Stomach (tissue), 19 donors: ENCODE measurements at regions of chr11 and their contacts with region 1.

Region 1: DNA sequence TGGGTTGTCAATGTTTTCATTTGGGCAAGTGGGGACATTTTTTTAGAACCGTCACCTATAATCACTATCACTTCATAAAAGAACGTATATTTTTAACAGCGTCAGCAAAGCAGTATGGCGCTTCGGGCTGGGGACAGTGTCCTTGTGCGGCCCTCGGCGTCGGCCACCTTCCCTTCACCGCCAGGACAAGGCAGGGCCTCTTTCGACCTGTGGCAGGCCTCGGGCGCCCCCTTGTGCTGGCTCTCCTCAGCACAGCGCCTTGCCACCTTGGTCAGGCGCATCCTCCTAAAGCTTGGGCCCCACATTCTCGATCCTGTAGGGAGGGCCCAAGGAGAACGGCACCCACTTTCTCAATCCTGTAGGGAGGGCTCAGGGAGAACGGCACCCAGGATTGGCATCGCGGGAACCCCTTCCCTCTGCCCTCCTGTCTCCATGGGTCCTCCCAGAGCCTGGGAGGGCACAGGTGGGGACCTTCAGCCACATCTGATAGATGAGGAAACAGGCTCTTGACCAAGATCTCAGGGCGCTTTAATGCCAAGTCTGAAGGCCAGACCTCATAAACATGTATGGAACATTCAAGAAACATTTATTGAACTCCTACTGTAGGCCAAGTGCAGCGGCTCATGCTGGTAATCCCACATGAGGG is 11.5 kb upstream of the FADD start:
- DNase-seq: peak; percentile 87 to 91
- H3K4me3 ChIP-seq: no peak overlapping the region
- H3K27ac ChIP-seq: no peak overlapping the region
- H3K4me1 ChIP-seq: peaks cover 0 to 6% (median 3%) of the 10 kb centered on the region in 4 donors
- H3K27me3 ChIP-seq: peaks cover 0 to 29% (median 0%) of the 10 kb centered on the region in 3 donors
- CTCF ChIP-seq: peak in 5 of 7 experiments; percentile 72 to 92 (median 83)
- EP300 ChIP-seq: no peak
- POLR2A ChIP-seq: no peak

Region 2: DNA sequence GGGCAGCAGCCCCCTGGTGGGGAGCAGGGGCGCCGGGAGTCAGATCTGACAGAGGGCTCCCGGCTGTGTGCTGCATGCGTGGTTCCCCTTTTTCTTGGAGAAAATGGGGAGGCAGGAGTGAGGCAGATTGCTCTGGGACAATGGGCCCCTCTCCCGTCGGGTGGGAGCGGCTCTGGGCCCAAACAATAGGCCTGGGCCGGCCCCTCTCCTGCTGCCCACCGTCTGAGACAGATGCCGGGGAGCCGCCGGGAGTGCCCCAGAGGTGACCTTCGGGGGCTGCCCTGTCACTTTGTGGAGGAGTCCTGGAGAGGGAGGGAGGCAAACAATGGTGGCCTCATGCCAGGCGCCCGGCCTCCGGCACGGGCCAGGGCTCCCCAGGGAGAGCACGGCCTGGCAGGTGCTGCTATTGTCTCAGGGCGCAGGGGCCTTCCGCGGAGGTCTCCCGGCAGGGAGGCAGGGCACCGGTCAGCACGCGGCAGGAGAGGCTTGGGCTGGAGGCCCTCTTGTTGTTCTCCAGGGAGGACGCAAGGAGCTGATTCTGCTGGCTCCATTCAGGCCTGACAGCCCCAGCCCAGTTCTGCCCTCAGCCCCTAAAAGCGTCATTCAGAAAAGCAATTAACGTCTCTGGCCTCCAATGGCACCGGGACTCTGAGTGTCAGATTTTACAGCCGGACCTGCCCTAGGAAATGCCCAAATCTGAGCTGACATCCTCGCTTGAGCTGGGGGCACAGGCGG is 991.1 kb before region 1 on chr11:
- intact Hi-C with region 1: no loop called
- DNase-seq: peak in 1 of 2 donors; percentile 38
- H3K4me3 ChIP-seq: no peak overlapping the region
- H3K27ac ChIP-seq: no peak overlapping the region
- H3K4me1 ChIP-seq: no peaks in the 10 kb centered on the region
- H3K27me3 ChIP-seq: peaks cover 0 to 32% (median 0%) of the 10 kb centered on the region in 3 donors
- CTCF ChIP-seq: no peak
- EP300 ChIP-seq: no peak
- POLR2A ChIP-seq: no peak

Region 3: DNA sequence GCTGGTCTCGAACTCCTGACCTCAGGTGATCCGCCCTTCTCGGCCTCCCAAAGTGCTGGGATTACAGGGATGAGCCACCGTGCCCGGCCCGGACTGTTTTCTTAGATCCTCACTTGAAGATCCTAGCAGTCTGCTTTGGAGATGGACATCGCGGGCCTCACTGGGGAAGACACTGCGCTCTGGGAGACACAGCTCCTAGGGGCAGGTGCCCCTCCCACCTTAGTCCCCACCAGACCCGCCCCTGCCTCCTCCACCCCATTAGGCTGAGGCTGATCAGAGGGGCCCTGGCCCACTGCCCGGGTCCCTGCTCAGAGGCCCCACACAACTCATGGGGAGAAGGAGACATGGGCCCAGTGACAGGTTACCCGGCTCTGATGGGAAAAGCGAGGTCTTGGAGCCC is 505.2 kb before region 1 on chr11:
- intact Hi-C with region 1: loop called (anchors 5 kb)
- DNase-seq: no peak
- H3K4me3 ChIP-seq: no peak overlapping the region
- H3K27ac ChIP-seq: no peak overlapping the region
- H3K4me1 ChIP-seq: peaks cover 5 to 7% (median 6%) of the 10 kb centered on the region in 4 donors
- H3K27me3 ChIP-seq: peaks cover 0 to 28% (median 4%) of the 10 kb centered on the region in 3 donors
- CTCF ChIP-seq: no peak
- EP300 ChIP-seq: no peak
- POLR2A ChIP-seq: no peak

Region 4: DNA sequence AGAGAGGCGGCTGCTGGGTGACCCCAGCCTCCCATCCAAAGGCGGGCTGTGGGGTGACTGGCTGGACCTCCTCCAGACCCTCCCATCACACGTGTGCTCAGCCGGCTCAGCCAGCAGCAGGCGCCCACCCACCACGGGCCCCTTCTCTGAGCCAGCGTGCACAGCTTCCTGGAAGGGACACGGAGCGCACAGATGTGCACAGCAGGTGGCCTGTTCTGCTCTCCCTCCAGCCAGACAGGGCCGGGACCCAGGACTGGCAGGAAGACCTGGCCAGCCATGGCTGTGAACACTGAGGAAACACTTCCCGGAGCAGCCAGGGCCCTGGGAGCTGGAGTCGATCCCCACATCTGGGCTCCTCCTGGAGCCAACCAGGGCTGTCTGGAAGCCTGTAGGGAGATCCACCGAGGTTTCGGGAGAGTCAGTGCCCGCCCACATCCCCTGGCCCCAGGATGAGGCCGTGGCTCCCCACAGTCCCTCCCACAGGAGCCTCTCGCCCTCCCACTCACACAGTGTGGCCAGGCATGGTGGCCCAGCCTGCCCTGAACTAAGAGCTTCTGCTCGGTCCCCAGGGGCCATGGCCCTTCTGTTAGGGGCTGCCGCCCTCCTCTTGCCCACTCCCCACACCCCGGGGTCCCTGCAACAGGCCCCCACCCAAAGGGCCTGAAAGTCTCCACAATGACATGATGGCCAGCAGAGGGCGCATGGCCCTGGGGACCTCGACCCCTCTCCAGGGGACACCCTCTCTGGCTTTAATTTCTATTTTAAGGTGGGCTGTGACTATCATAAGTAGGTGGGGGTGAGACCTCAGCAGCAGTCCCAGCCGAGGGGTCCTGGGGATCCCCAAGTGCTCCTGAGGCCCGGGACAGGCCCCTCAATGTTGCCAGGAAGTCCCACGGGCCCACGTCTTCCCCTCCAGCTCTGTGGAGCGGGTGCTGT is 281.8 kb before region 1 on chr11:
- intact Hi-C with region 1: loop called (anchors 5 kb)
- DNase-seq: peak in 1 of 2 donors; percentile 56
- H3K4me3 ChIP-seq: no peak overlapping the region
- H3K27ac ChIP-seq: no peak overlapping the region
- H3K4me1 ChIP-seq: peaks cover 7 to 24% (median 18%) of the 10 kb centered on the region in 4 donors
- H3K27me3 ChIP-seq: peaks cover 0 to 81% (median 25%) of the 10 kb centered on the region in 3 donors
- CTCF ChIP-seq: peak in 2 of 7 experiments; percentile 45 to 48
- EP300 ChIP-seq: no peak
- POLR2A ChIP-seq: no peak

Region 5: DNA sequence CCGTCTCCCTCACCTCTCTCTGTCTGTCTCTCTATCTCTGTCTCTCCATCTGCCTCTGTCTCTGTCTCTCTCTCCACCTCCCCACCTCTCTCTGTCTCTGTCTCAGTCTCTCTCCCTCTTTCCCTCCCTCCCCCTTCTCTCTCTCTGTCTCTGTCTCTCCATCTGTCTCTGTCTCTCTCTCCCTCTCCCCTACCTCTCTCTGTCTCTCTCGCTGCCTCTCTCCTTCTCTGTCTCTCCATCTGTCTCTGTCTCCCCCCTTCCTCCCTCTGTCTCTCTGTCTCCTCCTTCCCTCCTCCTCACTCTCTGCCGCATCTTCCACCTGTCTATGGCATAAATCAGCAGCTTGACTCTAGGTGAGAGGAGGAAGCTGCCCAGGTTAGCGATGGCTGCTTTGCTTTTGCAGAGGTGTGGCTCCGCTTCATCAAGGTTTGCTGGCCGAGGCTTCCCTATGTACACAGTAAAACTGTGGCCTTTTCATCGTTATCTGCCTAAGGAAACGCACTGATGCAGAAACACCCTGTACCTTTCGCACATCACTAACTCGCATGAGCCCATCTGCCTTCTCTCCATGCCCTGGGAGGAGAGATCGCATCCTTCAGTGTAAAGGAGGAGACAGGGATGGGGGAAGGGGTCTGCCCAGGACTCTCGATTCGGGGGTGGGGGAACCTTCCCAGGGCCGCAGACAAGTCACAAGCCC is 69.0 kb before region 1 on chr11:
- intact Hi-C with region 1: no loop called
- DNase-seq: no peak
- H3K4me3 ChIP-seq: no peak overlapping the region
- H3K27ac ChIP-seq: no peak overlapping the region
- H3K4me1 ChIP-seq: peaks cover 0 to 3% (median 2%) of the 10 kb centered on the region in 4 donors
- H3K27me3 ChIP-seq: peaks cover 0 to 9% (median 0%) of the 10 kb centered on the region in 3 donors
- CTCF ChIP-seq: no peak
- EP300 ChIP-seq: no peak
- POLR2A ChIP-seq: no peak